Lower lobe of right lung (tissue), 2 donors: ENCODE measurements at regions of chr20 and their contacts with region 1.

Region 1: DNA sequence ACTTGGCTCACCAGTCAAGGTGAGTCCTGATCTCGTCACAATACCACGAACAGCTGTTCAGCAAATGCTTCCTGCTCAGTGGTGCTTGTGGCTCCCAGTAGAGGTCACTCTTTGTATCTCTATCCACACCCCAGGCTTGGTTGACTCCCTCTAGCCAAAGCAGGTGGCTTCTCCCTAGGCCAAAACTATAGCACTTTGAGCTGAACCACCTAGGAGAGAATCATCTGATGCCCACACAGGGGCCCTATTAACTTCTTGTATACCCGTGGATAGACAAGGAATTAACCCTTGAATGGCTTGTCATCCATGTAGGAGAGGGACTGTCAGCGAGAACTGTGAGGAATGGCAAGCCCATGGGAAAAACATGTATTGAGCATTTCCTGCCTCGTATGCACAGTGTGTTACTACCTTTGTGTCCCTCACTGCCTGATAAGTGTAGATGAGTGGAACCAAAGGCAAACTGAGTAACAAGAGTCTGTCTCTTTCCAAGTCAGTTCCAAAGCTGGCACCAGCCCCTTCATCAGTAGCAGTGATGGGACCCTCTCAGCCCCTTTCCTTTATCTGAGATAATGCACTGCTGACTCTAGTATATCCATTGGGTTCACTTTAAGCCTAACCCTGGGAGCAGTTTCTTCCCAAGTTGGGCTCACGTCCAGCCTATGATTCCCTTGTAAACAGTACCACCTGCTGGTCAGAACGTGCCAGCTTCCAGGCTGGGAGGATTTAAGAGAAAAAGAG is 42.5 kb downstream of the EIF2S2 start:
- DNase-seq: peak; percentile 64
- ATAC-seq: peak; percentile 89 to 91
- H3K4me3 ChIP-seq: no peak overlapping the region
- H3K27ac ChIP-seq: no peak overlapping the region
- H3K4me1 ChIP-seq: peaks cover 30% of the 10 kb centered on the region
- H3K27me3 ChIP-seq: no peaks in the 10 kb centered on the region
- CTCF ChIP-seq: peak; percentile 84

Region 2: GRCh38 chr20:33900521-33901131 is 168.9 kb before region 1 on chr20:
- intact Hi-C with region 1: no loop called
- DNase-seq: no peak
- ATAC-seq: no peak
- H3K4me3 ChIP-seq: no peak overlapping the region
- H3K27ac ChIP-seq: no peak overlapping the region
- H3K4me1 ChIP-seq: no peaks in the 10 kb centered on the region
- H3K27me3 ChIP-seq: peaks cover 10% of the 10 kb centered on the region
- CTCF ChIP-seq: no peak

Region 3: GRCh38 chr20:33933469-33933909 is 136.0 kb before region 1 on chr20:
- intact Hi-C with region 1: loop called (anchors 10 kb)
- DNase-seq: peak; percentile 61
- ATAC-seq: peak; percentile 76 to 85
- H3K4me3 ChIP-seq: no peak overlapping the region
- H3K27ac ChIP-seq: no peak overlapping the region
- H3K4me1 ChIP-seq: no peaks in the 10 kb centered on the region
- H3K27me3 ChIP-seq: no peaks in the 10 kb centered on the region
- CTCF ChIP-seq: peak; percentile 52

Region 4: GRCh38 chr20:33964441-33964840 is 105.1 kb before region 1 on chr20:
- intact Hi-C with region 1: no loop called
- DNase-seq: no peak
- ATAC-seq: no peak
- H3K4me3 ChIP-seq: no peak overlapping the region
- H3K27ac ChIP-seq: no peak overlapping the region
- H3K4me1 ChIP-seq: no peaks in the 10 kb centered on the region
- H3K27me3 ChIP-seq: no peaks in the 10 kb centered on the region
- CTCF ChIP-seq: no peak

Region 5: GRCh38 chr20:34676642-34677373 is 607.3 kb after region 1 on chr20 and contains the start of gene PIGU:
- intact Hi-C with region 1: no loop called
- DNase-seq: peak; percentile 98
- ATAC-seq: peak; percentile 100
- H3K4me3 ChIP-seq: peak within 1 kb of the TSS; percentile 79
- H3K27ac ChIP-seq: peak within 1 kb of the TSS; percentile 84
- H3K4me1 ChIP-seq: peaks cover 17% of the 10 kb centered on the region
- H3K27me3 ChIP-seq: no peaks in the 10 kb centered on the region
- CTCF ChIP-seq: peak; percentile 48
- total RNA-seq, gene PIGU: 13.8 TPM